GM23248 (cell line): ENCODE measurements at regions of chr4 and their contacts with region 1.

Region 1: GRCh38 chr4:17324386-17324830 is 187.5 kb downstream of the QDPR start:
- DNase-seq: peak; percentile 83
- H3K4me3 ChIP-seq: peak overlapping the region; percentile 64
- H3K27ac ChIP-seq: 0 out of 2 replicates have a peak overlapping the region, but pooled peaks have one; percentile 19
- H3K4me1 ChIP-seq: peaks cover 27% of the 10 kb centered on the region
- H3K27me3 ChIP-seq: no peaks in the 10 kb centered on the region

Region 2: GRCh38 chr4:16843831-16844508 is 480.4 kb before region 1 on chr4:
- in situ Hi-C with region 1: no loop called
- DNase-seq: peak; percentile 92
- H3K4me3 ChIP-seq: no peak overlapping the region
- H3K27ac ChIP-seq: no peak overlapping the region; the same call in 1 of the 2 replicates
- H3K4me1 ChIP-seq: peaks cover 12% of the 10 kb centered on the region; the same call in 1 of the 2 replicates
- H3K27me3 ChIP-seq: no peaks in the 10 kb centered on the region

Region 3: GRCh38 chr4:16916719-16917337 is 407.6 kb before region 1 on chr4:
- in situ Hi-C with region 1: loop called (anchors 10 kb)
- DNase-seq: peak; percentile 25
- H3K4me3 ChIP-seq: no peak overlapping the region
- H3K27ac ChIP-seq: no peak overlapping the region
- H3K4me1 ChIP-seq: peaks cover 5% of the 10 kb centered on the region; the same call in 1 of the 2 replicates
- H3K27me3 ChIP-seq: no peaks in the 10 kb centered on the region

Region 4: GRCh38 chr4:17418010-17418409 is 93.6 kb after region 1 on chr4:
- in situ Hi-C with region 1: no loop called
- DNase-seq: no peak
- H3K4me3 ChIP-seq: no peak overlapping the region
- H3K27ac ChIP-seq: no peak overlapping the region
- H3K4me1 ChIP-seq: no peaks in the 10 kb centered on the region
- H3K27me3 ChIP-seq: peaks cover 26% of the 10 kb centered on the region